ENCODE measurements at regions of chr6 and their contacts with region 1.

Region 1: DNA sequence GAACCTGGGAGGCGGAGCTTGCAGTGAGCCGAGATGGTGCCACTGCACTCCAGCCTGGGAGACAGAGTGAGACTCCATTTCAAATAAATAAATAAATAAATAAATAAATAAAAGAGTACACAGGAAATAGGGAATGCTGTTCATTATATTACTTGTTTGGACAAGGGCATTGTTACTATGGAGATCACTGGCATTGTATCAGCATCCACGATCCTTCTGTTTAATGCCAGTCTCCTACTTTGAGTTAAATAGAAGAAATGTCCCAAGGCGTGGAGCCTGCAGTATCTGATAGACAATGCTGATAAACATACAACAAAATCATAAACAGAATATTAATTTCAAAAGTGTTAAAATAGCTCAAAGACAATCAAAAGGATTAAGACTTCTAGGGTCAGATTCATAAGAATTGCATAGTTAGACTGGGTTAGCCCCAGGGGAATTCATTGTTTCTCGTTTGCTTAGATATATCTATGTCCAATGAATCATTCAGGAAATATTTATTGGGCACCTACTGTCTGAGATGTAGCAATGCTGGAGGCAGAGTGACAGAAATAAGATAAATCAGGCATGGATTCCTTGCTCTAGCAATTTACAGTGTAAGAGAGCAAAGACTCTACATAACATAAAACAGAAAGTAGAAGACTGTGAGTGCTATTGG is 124.2 kb upstream of the PRL start:
- DNase-seq: no peak
- ATAC-seq: no peak
- H3K4me3 ChIP-seq: no peak overlapping the region
- H3K27ac ChIP-seq: no peak overlapping the region
- H3K4me1 ChIP-seq: no peaks in the 10 kb centered on the region
- H3K27me3 ChIP-seq: no peaks in the 10 kb centered on the region
- CTCF ChIP-seq: no peak

Region 2: DNA sequence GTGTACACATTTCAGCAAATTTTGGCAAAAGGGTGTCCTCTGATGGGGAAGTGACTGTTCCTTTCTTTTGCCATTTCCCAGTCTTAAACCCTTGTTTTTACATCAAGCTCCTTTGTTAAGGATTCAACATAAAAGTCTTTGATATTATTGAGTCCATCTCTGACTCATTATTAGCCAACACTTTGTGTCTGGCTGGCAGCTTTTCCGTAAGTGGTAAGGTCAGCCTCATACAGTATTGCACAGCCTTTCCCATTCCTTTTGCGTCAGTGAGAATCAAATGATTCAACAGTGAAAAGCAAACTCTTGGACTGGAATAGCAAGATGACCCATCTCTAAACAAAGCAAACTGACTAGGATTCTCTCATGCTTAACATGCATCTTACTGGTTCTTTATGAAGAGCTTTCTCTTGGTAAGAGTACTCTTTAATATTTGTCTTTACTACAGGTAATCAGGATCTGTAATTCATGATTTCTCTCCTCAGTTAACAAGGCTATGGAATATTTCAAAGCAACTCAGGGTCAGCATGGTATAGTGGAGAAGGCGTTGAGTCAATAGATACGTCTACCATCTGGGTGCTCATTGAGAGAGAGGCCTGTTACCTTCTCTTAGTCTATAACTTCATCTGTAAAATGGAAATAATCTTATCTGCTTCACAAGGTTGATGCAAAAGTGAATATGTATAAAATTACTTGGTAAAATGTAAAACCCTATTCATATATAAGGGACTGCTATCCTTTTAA is 307.9 kb before region 1 on chr6:
- intact Hi-C with region 1: no loop called
- DNase-seq: peak in 1 of 2 donors; percentile 20
- ATAC-seq: peak in 3 of 4 donors; percentile 56 to 81 (median 59)
- H3K4me3 ChIP-seq: no peak overlapping the region
- H3K27ac ChIP-seq: no peak overlapping the region
- H3K4me1 ChIP-seq: no peaks in the 10 kb centered on the region
- H3K27me3 ChIP-seq: no peaks in the 10 kb centered on the region
- CTCF ChIP-seq: no peak

Region 3: DNA sequence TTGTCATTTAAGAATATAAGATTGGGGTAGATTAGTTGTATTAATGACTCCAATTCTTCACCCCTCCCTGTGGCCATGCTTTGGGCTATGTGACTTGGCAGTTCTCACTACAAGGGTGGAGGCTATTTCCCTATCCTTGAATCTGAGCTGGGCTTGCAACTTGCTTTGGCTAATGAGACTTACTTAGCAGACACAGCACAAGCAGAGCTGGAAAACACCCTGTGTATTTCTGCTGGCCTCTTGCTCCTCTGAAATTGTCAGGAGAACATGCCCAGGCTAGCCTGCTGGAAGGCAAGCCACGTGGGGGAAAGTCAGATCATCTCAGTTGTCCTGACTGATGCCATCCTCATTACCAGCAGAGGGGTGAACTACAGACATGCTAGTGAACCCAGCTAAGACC is 21.8 kb after region 1 on chr6:
- intact Hi-C with region 1: loop called in 1 of 2 experiments (anchors 1 kb)
- DNase-seq: no peak
- ATAC-seq: peak in 1 of 4 donors; percentile 74
- H3K4me3 ChIP-seq: no peak overlapping the region
- H3K27ac ChIP-seq: peak overlapping the region; percentile 38
- H3K4me1 ChIP-seq: peaks cover 34% of the 10 kb centered on the region
- H3K27me3 ChIP-seq: no peaks in the 10 kb centered on the region
- CTCF ChIP-seq: no peak

Measured in psoas muscle (tissue), 8 donors.